Caco-2 (cell line): ENCODE measurements at regions of chr3 and their contacts with region 1.

Region 1: GRCh38 chr3:30628901-30629590 is 22.6 kb downstream of the TGFBR2 start:
- DNase-seq: peak in 1 of 2 experiments; percentile 27
- H3K4me3 ChIP-seq: no peak overlapping the region
- H3K4me3 Mint-ChIP-seq: peak overlapping the region; percentile 16
- H3K27ac Mint-ChIP-seq: peak overlapping the region; percentile 79
- H3K4me1 ChIP-seq: peaks cover 75% of the 10 kb centered on the region
- H3K4me1 Mint-ChIP-seq: peaks cover 54% of the 10 kb centered on the region
- H3K27me3 ChIP-seq: no peaks in the 10 kb centered on the region
- H3K27me3 Mint-ChIP-seq: no peaks in the 10 kb centered on the region
- CTCF ChIP-seq: peak in 1 of 2 experiments; percentile 11

Region 2: GRCh38 chr3:30042274-30042859 is 586.7 kb before region 1 on chr3:
- CTCF ChIA-PET with region 1: interaction called, 3 read pairs
- POLR2A ChIA-PET with region 1: no interaction called
- intact Hi-C with region 1: loop called (anchors 10 kb)
- DNase-seq: peak; percentile 69 to 72
- H3K4me3 ChIP-seq: no peak overlapping the region
- H3K4me3 Mint-ChIP-seq: no peak overlapping the region
- H3K27ac Mint-ChIP-seq: no peak overlapping the region
- H3K4me1 ChIP-seq: peaks cover 10% of the 10 kb centered on the region; the same call in 1 of the 2 replicates
- H3K4me1 Mint-ChIP-seq: no peaks in the 10 kb centered on the region
- H3K27me3 ChIP-seq: no peaks in the 10 kb centered on the region
- H3K27me3 Mint-ChIP-seq: no peaks in the 10 kb centered on the region
- CTCF ChIP-seq: peak; percentile 76 to 86

Region 3: GRCh38 chr3:30227571-30228301 is 401.3 kb before region 1 on chr3:
- CTCF ChIA-PET with region 1: no interaction called
- POLR2A ChIA-PET with region 1: no interaction called
- intact Hi-C with region 1: loop called (anchors 5 kb)
- DNase-seq: peak in 1 of 2 experiments; percentile 60
- H3K4me3 ChIP-seq: no peak overlapping the region
- H3K4me3 Mint-ChIP-seq: peak overlapping the region; percentile 47
- H3K27ac Mint-ChIP-seq: peak overlapping the region; percentile 85
- H3K4me1 ChIP-seq: peaks cover 33% of the 10 kb centered on the region
- H3K4me1 Mint-ChIP-seq: peaks cover 20% of the 10 kb centered on the region
- H3K27me3 ChIP-seq: no peaks in the 10 kb centered on the region
- H3K27me3 Mint-ChIP-seq: no peaks in the 10 kb centered on the region
- CTCF ChIP-seq: no peak

Region 4: DNA sequence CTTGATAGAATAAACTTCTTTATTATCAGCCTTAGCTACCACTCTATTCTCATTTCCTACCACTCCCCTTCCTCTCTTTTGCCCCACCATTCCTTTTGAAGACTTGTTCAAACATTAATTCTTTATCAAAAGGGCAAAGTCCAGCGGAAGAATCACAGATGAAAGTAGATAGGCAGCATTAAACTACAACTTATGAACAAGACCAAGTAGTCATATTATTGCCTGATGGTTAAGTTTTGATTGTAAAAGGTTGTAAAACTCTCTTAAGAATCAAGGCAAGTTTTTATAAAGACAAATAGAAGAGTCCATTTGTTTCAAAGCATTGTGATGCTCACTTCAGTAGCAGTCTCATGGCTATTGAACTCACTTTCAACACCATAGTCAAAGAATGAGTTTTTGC is 45.1 kb before region 1 on chr3:
- CTCF ChIA-PET with region 1: no interaction called
- POLR2A ChIA-PET with region 1: no interaction called
- intact Hi-C with region 1: loop called (anchors 1 kb)
- DNase-seq: peak in 1 of 2 experiments; percentile 62
- H3K4me3 ChIP-seq: no peak overlapping the region
- H3K4me3 Mint-ChIP-seq: no peak overlapping the region
- H3K27ac Mint-ChIP-seq: peak overlapping the region; percentile 88
- H3K4me1 ChIP-seq: peaks cover 62% of the 10 kb centered on the region
- H3K4me1 Mint-ChIP-seq: peaks cover 41% of the 10 kb centered on the region
- H3K27me3 ChIP-seq: no peaks in the 10 kb centered on the region
- H3K27me3 Mint-ChIP-seq: no peaks in the 10 kb centered on the region
- CTCF ChIP-seq: no peak

Region 5: DNA sequence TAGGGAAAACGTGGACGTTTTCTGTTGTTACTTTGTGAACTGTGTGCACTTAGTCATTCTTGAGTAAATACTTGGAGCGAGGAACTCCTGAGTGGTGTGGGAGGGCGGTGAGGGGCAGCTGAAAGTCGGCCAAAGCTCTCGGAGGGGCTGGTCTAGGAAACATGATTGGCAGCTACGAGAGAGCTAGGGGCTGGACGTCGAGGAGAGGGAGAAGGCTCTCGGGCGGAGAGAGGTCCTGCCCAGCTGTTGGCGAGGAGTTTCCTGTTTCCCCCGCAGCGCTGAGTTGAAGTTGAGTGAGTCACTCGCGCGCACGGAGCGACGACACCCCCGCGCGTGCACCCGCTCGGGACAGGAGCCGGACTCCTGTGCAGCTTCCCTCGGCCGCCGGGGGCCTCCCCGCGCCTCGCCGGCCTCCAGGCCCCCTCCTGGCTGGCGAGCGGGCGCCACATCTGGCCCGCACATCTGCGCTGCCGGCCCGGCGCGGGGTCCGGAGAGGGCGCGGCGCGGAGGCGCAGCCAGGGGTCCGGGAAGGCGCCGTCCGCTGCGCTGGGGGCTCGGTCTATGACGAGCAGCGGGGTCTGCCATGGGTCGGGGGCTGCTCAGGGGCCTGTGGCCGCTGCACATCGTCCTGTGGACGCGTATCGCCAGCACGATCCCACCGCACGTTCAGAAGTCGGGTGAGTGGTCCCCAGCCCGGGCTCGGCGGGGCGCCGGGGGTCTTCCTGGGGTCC is 22.6 kb before region 1 on chr3 and contains the start of gene TGFBR2:
- CTCF ChIA-PET with region 1: interaction called, 4 read pairs
- POLR2A ChIA-PET with region 1: interaction called, 3 read pairs
- intact Hi-C with region 1: loop called (anchors 2 kb)
- DNase-seq: peak; percentile 94 to 98
- H3K4me3 ChIP-seq: peak within 1 kb of the TSS; percentile 68
- H3K4me3 Mint-ChIP-seq: peak within 1 kb of the TSS; percentile 90
- H3K27ac Mint-ChIP-seq: peak within 1 kb of the TSS; percentile 83
- H3K4me1 ChIP-seq: peaks cover 58% of the 10 kb centered on the region
- H3K4me1 Mint-ChIP-seq: peaks cover 34% of the 10 kb centered on the region
- H3K27me3 ChIP-seq: no peaks in the 10 kb centered on the region
- H3K27me3 Mint-ChIP-seq: no peaks in the 10 kb centered on the region
- CTCF ChIP-seq: peak in 1 of 2 experiments; percentile 11
- total RNA-seq, gene TGFBR2: 40.5 and 41.9 TPM in 2 replicates

Region 6: DNA sequence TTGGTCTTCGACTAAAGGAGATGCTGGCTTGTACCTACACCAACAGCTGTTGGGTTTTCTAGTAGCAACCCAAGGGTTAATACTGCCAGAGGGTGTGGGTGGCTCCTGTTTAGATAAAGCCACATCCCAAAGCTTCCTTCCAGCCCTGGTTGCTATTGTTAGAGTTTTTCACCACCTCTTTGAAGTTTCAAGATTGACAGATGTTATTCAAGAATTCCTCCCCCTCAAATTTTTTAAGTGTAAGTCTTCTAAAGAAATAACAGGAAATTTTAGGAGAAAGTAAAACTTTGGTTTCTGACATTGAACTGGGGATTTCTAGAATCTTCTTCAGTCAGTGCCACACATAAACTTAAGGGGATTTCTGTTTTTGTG is 38.2 kb after region 1 on chr3:
- CTCF ChIA-PET with region 1: no interaction called
- POLR2A ChIA-PET with region 1: no interaction called
- intact Hi-C with region 1: no loop called
- DNase-seq: peak; percentile 64 to 72
- H3K4me3 ChIP-seq: no peak overlapping the region
- H3K4me3 Mint-ChIP-seq: no peak overlapping the region
- H3K27ac Mint-ChIP-seq: no peak overlapping the region
- H3K4me1 ChIP-seq: peaks cover 36% of the 10 kb centered on the region
- H3K4me1 Mint-ChIP-seq: peaks cover 63% of the 10 kb centered on the region
- H3K27me3 ChIP-seq: no peaks in the 10 kb centered on the region
- H3K27me3 Mint-ChIP-seq: no peaks in the 10 kb centered on the region
- CTCF ChIP-seq: no peak

Region 7: GRCh38 chr3:31096661-31097395 is 467.8 kb after region 1 on chr3:
- CTCF ChIA-PET with region 1: no interaction called
- POLR2A ChIA-PET with region 1: no interaction called
- intact Hi-C with region 1: no loop called
- DNase-seq: no peak
- H3K4me3 ChIP-seq: no peak overlapping the region
- H3K4me3 Mint-ChIP-seq: no peak overlapping the region
- H3K27ac Mint-ChIP-seq: no peak overlapping the region
- H3K4me1 ChIP-seq: peaks cover 34% of the 10 kb centered on the region
- H3K4me1 Mint-ChIP-seq: peaks cover 31% of the 10 kb centered on the region
- H3K27me3 ChIP-seq: no peaks in the 10 kb centered on the region
- H3K27me3 Mint-ChIP-seq: no peaks in the 10 kb centered on the region
- CTCF ChIP-seq: no peak